Activated naive CD4-positive, alpha-beta T cell treated with anti-CD3 and anti-CD28 coated beads for 36 hours (primary cell): ENCODE measurements at regions of chr11 and their contacts with region 1.

Region 1: GRCh38 chr11:123707606-123708205 is 33.8 kb downstream of the ZNF202 start:
- DNase-seq: peak; percentile 88
- H3K4me3 Mint-ChIP-seq: no peak overlapping the region
- H3K27ac Mint-ChIP-seq: no peak overlapping the region
- H3K4me1 Mint-ChIP-seq: peaks cover 2% of the 10 kb centered on the region
- H3K27me3 Mint-ChIP-seq: no peaks in the 10 kb centered on the region

Region 2: DNA sequence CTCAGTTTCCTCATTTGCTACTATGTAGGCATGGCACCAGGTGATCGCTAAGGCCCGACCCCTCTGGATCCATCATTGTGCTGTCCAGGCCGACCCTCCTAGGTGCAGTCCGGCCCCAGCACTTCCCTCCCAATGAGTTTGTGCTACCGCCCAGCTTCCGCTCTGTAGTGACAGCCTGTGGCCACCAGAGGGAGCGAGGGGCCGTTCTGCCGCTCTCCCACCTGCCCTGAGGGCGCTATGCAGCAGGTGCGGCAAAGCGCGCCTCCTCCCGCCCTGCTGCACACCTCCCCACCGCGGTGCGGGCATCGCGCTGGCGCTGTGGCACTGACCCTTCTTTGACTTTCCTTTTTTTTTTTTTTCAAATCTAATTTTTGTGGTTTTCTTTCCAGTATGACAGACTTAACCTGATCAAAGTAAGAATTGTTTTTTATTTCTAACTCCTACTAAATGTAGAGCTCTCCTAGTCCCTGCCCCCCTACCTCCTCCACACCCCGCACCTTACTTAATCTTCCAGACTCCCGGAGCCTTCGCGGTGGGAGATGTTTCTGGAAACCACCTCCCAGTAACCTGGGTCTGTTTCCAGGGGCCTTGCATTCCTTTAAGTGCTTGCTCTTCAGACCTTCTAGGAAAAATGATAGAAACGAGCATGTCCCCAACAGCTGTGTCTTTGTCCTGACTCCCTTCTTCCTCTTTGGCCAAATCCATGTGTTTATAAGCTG is 127.0 kb before region 1 on chr11:
- CTCF ChIA-PET with region 1: interaction called, 20 read pairs
- intact Hi-C with region 1: loop called (anchors 1 kb)
- DNase-seq: peak; percentile 78
- H3K4me3 Mint-ChIP-seq: no peak overlapping the region
- H3K27ac Mint-ChIP-seq: no peak overlapping the region
- H3K4me1 Mint-ChIP-seq: peaks cover 9% of the 10 kb centered on the region
- H3K27me3 Mint-ChIP-seq: peaks cover 2% of the 10 kb centered on the region

Region 3: GRCh38 chr11:123654566-123655081 is 53.1 kb before region 1 on chr11 and contains the start of gene SCN3B:
- CTCF ChIA-PET with region 1: interaction called, 32 read pairs
- intact Hi-C with region 1: no loop called
- DNase-seq: peak; percentile 9
- H3K4me3 Mint-ChIP-seq: peak within 1 kb of the TSS; percentile 61
- H3K27ac Mint-ChIP-seq: no peak within 1 kb of the TSS
- H3K4me1 Mint-ChIP-seq: peaks cover 13% of the 10 kb centered on the region
- H3K27me3 Mint-ChIP-seq: peaks cover 45% of the 10 kb centered on the region
- total RNA-seq, gene SCN3B: not detected

Region 4: DNA sequence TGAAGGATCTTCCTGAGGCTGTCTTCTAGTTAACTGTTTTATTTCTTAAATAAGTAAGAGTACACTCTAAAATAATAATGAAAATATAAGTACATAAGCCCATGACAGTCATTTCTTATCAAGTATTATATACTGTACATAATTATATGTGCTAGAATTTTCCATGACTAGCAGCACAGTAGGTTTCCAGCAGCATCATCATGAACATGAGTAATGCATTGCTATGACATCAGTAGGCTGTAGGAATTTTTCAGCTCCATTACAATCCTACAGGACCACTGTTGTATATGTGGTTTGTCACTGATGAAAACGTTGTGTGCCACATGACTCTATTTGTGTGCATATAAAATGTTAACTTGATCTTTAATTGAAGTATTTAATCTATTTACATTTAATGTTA is 11.7 kb after region 1 on chr11:
- CTCF ChIA-PET with region 1: interaction called, 40 read pairs
- intact Hi-C with region 1: no loop called
- DNase-seq: no peak
- H3K4me3 Mint-ChIP-seq: no peak overlapping the region
- H3K27ac Mint-ChIP-seq: no peak overlapping the region
- H3K4me1 Mint-ChIP-seq: peaks cover 7% of the 10 kb centered on the region
- H3K27me3 Mint-ChIP-seq: peaks cover 14% of the 10 kb centered on the region